ENCODE measurements at regions of chr5 and their contacts with region 1.

Region 1: GRCh38 chr5:163473635-163474243 is 13.3 kb downstream of the HMMR start:
- DNase-seq: peak; percentile 46
- H3K4me3 Mint-ChIP-seq: no peak overlapping the region
- H3K27ac Mint-ChIP-seq: no peak overlapping the region
- H3K4me1 Mint-ChIP-seq: peaks cover 13% of the 10 kb centered on the region
- H3K27me3 Mint-ChIP-seq: no peaks in the 10 kb centered on the region
- CTCF ChIP-seq: peak; percentile 42

Region 2: DNA sequence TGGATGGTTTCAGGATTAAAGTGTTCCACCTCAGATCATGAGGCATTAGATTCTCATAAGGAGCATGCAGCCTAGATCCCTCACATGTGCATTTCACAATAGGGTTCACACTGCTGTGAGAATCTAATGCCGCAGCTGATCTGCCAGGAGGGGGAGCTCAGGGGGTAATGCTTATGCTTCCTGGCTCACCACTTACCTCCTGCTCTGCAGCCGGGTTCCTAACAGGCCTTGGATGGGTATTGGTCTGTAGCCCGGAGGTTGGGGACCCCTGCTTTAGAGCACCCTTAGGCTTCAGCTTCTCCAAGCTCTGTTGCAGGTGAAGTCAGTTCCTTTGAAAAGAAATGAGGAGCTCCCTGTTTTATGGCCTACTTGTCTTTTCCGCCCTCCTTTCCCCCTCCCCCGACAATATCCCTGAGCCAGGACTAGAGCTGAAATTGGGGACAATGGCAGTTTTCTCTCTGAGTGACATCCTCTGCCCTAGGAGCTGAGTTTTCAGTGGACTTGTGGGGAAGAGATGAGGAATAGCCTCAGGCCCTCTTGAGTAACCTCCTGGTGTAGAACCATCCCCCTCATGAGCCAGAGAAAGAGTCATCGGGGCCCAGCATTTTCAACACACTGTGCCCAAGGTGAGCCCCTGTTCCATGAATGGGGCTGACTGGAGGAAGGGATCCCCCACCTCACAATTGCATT is 15.5 kb after region 1 on chr5:
- CTCF ChIA-PET with region 1: interaction called, 6 read pairs
- POLR2A ChIA-PET with region 1: interaction called, 14 read pairs
- intact Hi-C with region 1: no loop called
- DNase-seq: peak; percentile 66
- H3K4me3 Mint-ChIP-seq: no peak overlapping the region
- H3K27ac Mint-ChIP-seq: peak overlapping the region; percentile 14
- H3K4me1 Mint-ChIP-seq: peaks cover 4% of the 10 kb centered on the region
- H3K27me3 Mint-ChIP-seq: no peaks in the 10 kb centered on the region
- CTCF ChIP-seq: peak; percentile 14